Right ventricle myocardium inferior (tissue), 1 donor: ENCODE measurements at regions of chr1 and their contacts with region 1.

Region 1: GRCh38 chr1:206106328-206107167 is 10.6 kb downstream of the AVPR1B start:
- DNase-seq: peak; percentile 90
- ATAC-seq: peak; percentile 83

Region 2: GRCh38 chr1:205791568-205792180 is 314.9 kb before region 1 on chr1:
- intact Hi-C with region 1: loop called (anchors 10 kb)
- DNase-seq: no peak
- ATAC-seq: peak; percentile 58

Region 3: DNA sequence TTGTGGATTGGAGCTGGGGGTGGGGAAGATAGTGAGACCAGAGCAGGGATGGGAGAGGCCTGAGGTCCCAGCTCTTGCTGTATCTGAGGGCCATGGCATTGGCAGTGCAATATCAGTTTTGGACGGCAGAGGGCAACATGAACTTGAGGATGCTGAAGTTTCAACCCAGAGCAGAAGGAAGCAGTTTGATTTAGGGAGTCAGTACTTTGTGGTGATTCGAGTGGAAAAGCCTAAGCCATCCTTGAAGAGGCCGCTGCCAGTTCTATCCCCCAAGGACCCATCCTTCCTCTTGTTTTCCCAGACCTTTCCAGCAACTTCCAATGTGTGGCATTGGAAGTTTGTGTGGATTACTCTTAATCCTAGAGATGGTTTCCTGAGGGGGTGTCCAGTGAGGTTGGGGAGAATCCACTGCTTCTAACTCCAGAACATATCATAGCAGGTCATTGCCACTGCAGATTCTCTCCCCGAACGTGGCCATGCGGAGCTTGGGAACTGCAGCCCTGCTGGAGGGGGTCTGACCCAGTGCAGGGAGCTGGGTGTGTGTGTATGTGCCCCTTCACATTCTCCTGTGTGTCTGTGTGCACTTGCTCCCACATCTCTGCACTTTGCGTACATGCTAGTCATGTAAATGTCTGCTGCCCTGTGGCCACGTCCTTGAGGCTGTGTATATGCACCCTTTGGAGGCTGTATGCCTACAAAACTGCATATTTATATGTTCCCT is 187.4 kb before region 1 on chr1:
- intact Hi-C with region 1: loop called (anchors 2 kb)
- DNase-seq: peak; percentile 87
- ATAC-seq: peak; percentile 53

Region 4: DNA sequence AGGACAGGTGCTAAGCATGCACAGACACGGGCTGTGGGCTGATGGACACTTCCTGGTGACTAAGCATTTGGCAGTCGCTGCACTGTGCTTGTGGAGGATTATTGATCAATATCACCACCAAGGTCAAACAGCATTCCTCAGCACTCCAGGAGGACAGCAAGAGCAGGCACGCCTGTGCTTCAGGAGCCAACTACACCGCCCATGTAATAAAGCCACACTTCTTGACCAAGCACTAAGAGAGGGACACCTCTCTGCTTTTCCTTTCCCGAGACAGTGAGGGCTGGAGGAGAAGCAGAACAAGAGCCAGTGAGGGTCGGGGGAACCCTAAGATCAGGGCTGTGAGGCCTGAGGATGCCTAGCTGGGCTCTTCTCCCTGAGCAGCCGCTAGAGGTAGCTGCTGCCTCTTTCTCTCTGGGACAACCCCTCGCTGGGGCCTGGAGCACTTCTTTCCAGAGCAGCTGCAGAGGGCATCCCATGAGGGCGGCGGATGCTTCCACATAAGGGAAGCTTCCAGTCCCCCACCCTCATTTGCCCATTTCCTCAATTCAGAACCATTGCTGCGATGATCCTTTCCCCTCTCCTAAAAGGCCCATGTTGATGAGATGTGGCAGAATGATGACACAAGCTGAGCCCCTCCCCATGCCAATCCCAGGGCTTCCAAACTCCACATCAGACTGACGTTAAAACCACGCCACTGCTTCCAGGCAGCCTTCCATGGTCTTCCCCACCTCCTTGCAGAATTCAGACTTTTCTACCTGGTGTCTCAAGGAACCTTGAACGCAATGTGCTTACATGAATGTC is 122.4 kb before region 1 on chr1:
- intact Hi-C with region 1: loop called (anchors 1 kb)
- DNase-seq: peak; percentile 82
- ATAC-seq: peak; percentile 86

Region 5: GRCh38 chr1:206030714-206031113 is 75.8 kb before region 1 on chr1:
- intact Hi-C with region 1: loop called (anchors 2 kb)
- DNase-seq: peak; percentile 77
- ATAC-seq: peak; percentile 67